ENCODE measurements at regions of chr19 and their contacts with region 1.

Region 1: DNA sequence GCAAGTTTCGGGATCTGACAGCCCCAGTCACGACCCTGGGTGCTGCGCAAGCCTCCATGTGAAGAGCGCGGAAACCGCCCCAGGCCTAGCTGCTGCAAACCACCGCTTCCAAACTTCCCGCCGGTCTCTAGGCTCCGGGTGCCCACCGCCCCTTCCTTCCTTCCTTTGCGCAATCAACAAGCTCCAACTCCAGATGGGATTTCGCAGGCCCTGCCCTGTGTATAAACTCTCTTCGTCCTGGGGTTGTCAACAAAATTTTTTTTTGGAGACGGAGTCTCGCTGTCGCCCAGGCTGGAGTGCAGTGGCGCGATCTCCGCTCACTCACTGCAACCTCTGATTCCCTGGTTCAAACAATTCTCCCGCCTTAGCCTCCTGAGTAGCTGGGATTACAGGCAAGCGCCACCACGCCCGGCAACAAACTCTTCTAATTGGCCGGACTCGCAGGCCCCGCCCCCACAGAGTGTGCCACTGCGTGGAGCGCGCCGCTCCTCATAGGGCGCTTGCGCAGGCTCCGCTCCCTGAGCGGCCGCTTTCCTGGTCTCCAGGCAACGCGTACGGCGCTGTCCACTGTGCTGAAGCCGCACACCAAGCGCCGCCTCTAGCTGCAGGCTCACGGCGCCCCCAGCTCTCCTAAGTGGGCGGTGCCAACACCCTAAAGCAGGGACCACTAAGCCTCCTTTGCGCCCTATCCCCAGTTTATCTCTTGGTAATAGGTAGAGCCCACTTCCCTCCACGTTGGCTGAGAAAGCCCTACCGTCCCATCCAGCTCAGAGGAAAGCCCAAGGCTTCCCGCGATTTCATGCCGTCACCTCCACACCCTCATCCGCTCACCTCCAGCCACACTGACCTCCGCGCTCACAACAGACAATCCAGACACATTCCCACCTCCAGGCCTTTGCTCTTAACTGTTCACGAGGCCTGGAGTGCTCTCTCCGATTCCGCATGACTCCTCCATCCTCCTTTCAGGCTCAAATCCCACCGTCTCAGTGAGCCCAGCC is 5.5 kb upstream of the QTRT1 start:
- DNase-seq: peak; percentile 95
- H3K4me3 Mint-ChIP-seq: peak overlapping the region; percentile 66
- H3K27ac Mint-ChIP-seq: no peak overlapping the region
- H3K4me1 Mint-ChIP-seq: peaks cover 11% of the 10 kb centered on the region
- H3K27me3 Mint-ChIP-seq: no peaks in the 10 kb centered on the region
- CTCF ChIP-seq: no peak

Region 2: GRCh38 chr19:10653715-10654492 is 41.8 kb before region 1 on chr19 and contains the start of gene ILF3:
- CTCF ChIA-PET with region 1: interaction called, 4 read pairs
- POLR2A ChIA-PET with region 1: interaction called, 9 read pairs
- intact Hi-C with region 1: loop called (anchors 2 kb)
- DNase-seq: peak; percentile 100
- H3K4me3 Mint-ChIP-seq: peak within 1 kb of the TSS; percentile 77
- H3K27ac Mint-ChIP-seq: peak within 1 kb of the TSS; percentile 98
- H3K4me1 Mint-ChIP-seq: peaks cover 12% of the 10 kb centered on the region
- H3K27me3 Mint-ChIP-seq: no peaks in the 10 kb centered on the region
- CTCF ChIP-seq: no peak
- total RNA-seq, gene ILF3: 278 and 297 TPM in 2 replicates